ENCODE measurements at regions of chr7 and their contacts with region 1.

Region 1: DNA sequence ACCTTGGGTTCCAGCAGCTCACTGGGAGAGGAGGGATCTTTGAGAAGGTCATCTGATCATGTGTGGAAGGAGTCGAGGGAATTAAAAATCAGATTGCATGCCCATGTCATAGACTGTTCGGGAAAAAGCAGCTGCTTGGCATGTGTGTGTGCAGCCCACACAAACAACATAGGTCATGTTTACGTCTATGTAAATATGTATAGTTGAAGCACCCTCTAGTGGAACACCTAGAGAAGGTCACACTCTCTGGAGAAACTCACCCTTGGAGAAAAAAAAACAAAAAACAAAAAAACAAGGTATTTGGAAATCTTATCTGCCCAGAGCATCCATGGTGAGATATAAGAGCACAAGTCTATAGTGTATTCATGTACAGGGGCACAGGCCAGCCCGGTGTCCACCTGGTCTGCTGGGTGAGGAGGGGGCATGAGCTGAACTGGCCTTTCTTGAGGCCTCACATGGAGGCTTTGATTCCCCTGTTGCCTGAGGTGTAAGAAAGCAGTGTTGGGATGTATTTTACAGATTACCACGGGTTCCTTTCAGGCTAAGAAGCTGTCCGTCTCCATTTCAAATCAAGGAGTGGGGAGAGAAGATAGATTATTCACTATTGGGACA is 98.0 kb downstream of the NPY start:
- DNase-seq: no peak
- H3K4me3 Mint-ChIP-seq: no peak overlapping the region
- H3K27ac Mint-ChIP-seq: no peak overlapping the region
- H3K4me1 Mint-ChIP-seq: no peaks in the 10 kb centered on the region
- H3K27me3 Mint-ChIP-seq: no peaks in the 10 kb centered on the region

Region 2: GRCh38 chr7:23863209-23863798 is 518.7 kb before region 1 on chr7:
- CTCF ChIA-PET with region 1: interaction called, 21 read pairs
- DNase-seq: no peak
- H3K4me3 Mint-ChIP-seq: no peak overlapping the region
- H3K27ac Mint-ChIP-seq: no peak overlapping the region
- H3K4me1 Mint-ChIP-seq: no peaks in the 10 kb centered on the region
- H3K27me3 Mint-ChIP-seq: peaks cover 3% of the 10 kb centered on the region

Region 3: DNA sequence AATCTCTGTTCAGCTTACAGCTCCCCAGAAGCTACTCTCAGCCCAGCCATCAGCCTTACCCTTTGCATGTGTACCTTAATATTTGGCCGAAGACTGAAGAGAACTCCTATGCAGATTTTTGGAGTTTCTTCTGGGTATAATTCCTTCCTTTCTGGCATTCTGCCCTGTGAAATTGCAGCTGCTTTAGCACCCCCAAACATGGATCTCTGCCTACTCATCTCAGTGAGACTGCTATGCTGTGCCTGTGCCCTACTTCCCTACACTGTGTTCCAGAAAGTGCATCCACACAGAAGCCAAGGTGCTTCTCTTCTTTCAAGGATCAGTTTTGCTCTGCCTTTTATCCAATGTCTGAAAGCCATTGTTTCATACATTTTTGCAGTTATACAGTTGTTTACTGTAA is 16.4 kb before region 1 on chr7:
- CTCF ChIA-PET with region 1: no interaction called
- DNase-seq: no peak
- H3K4me3 Mint-ChIP-seq: no peak overlapping the region
- H3K27ac Mint-ChIP-seq: no peak overlapping the region
- H3K4me1 Mint-ChIP-seq: no peaks in the 10 kb centered on the region
- H3K27me3 Mint-ChIP-seq: peaks cover 12% of the 10 kb centered on the region

Region 4: DNA sequence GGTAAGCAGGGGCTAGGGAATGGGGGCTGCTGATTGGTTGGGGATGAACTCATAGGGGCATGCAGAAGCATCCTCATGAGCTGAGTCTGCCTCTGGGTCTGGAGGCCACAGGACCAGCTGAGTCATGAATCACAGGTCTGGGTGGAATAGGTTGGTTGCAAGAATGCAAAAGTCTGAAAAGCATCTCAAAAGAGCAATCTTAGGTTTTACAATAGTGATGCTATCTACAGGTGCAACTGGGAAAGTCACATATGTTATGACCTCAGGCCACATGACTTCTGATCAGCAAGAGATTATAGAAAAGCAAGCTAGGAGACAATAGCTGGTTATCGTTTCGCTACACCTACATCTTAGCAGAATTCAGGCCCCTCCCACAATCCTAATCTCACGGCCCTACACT is 133.9 kb after region 1 on chr7:
- CTCF ChIA-PET with region 1: no interaction called
- DNase-seq: no peak
- H3K4me3 Mint-ChIP-seq: no peak overlapping the region
- H3K27ac Mint-ChIP-seq: no peak overlapping the region
- H3K4me1 Mint-ChIP-seq: no peaks in the 10 kb centered on the region
- H3K27me3 Mint-ChIP-seq: peaks cover 15% of the 10 kb centered on the region

Measured in activated naive CD4-positive, alpha-beta T cell treated with anti-CD3 and anti-CD28 coated beads, Interleukin-2, amount 10 ng/mL, durations not matched to agents 7 days and 5 days (primary cell).